ENCODE measurements at regions of chr20 and their contacts with region 1.

Region 1: DNA sequence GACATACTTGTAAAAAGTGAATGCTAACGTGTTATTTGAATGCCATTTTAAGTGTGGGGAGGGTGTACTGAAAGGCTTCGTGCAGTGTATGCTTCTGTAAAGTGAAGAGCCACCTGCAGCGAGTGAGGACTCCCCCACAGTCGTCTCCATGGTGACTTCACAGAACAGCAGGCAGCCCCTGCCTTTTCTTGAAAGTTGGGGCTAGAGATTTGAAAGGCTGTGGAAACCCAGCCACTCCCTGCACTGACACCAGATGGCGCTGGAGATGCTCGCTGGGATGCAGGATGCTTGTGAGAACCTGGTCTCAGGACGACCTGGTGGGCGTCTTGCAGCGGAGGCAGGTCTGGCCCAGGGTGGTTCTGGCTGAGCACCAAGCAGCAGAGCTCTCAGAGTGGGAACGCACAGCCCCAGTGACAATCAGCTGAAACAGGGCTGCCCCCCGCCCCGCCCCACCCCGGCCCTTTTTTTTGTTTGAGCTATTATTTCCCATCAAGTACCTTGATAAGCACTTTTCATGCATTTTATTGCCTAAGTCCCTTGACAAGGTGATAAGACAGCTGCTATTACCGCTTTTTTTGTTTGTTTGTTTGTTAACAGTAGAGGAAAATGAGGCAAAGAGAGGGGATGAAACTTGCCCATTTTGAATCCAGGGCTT is 150.3 kb downstream of the SYCP2 start:
- DNase-seq: peak; percentile 88
- H3K4me3 Mint-ChIP-seq: no peak overlapping the region
- H3K27ac Mint-ChIP-seq: no peak overlapping the region
- H3K4me1 Mint-ChIP-seq: no peaks in the 10 kb centered on the region
- H3K27me3 Mint-ChIP-seq: peaks cover 3% of the 10 kb centered on the region
- CTCF ChIP-seq: peak; percentile 99

Region 2: DNA sequence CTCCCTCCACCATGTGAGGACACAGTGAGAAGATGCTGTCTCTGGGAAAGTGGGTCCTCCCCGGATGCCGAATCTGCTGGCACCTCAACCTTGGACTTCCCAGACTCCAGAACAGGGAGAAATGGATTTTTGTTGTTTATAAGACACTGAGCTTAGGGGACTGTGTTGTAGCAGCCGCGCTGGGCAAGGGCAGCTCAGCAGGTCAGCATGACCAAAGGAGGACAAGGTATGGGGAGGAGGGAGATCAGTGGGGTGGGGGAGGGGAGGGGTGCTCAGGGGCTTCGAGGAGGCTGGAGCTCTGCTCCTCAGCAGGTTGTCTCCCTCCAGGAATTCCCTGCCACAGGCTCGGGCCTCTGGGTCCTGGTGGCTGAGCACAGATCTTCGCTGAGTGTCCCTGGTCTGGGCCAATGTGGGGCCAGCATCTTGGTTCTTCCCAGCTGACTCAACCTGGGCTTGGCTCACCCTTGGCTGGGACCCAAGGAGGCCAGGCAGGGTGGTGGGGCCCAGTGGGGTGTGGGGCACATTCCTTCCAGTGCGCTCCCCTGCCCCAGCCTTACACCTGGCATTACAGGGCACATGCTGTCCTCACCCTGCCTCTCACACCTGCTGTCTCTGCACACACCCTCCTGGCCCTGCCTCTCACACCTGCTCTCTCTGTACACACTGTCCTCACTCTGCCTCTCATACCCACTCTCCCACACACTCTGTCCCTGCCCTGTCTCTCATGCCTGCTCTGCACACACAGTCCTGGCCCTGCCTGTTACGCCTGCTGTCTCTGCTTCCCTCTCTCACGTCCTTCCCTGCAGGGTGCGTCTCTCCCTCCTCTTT is 43.0 kb after region 1 on chr20:
- CTCF ChIA-PET with region 1: interaction called, 14 read pairs
- intact Hi-C with region 1: loop called (anchors 2 kb)
- DNase-seq: peak; percentile 93
- H3K4me3 Mint-ChIP-seq: peak overlapping the region; percentile 8
- H3K27ac Mint-ChIP-seq: peak overlapping the region; percentile 53
- H3K4me1 Mint-ChIP-seq: peaks cover 57% of the 10 kb centered on the region
- H3K27me3 Mint-ChIP-seq: no peaks in the 10 kb centered on the region
- CTCF ChIP-seq: no peak

Region 3: DNA sequence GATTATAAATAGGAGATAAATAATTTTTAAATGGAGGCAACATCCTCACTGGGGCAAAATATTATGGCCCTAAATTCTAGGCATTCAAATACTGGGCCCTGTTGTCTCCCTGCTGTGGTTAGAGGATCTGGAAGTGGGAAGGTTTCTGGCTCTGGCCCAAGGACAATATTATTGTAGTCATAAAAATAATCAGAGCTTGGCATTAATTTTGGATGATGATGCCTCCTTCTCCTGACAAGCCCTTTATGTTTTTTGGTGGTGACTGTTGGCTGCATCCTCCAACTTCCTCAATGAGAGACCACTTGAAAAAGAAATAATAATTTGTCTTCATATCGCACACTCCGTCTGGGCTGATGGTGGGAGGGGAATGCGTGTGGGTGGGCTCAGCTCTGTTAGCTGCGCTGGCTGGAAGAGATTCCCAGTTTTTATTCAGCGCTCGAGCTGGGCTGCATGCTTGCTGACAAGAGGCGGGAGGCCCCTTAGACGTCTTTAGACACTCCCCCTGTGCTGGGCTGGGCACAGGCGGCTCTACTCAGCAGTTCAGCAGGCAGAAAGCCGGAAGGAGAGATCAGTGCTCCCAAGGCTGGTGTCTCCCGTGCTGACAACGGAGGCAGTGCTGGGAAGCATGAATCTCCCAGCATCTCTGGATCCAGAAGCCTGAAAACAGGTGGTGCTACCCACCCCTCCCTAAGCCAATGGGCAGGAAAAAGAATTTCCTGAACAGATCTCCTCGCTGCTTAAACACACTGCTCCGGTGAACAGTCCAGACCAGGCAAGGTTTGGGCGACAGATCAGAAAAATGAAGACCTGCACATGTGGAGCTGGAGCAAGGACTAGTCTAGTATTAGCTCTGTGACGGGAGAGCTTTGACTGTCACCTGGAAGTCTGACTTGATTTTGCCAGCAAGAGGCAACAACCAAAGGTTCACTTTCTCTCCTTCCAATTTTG is 52.6 kb after region 1 on chr20:
- CTCF ChIA-PET with region 1: interaction called, 14 read pairs
- intact Hi-C with region 1: no loop called
- DNase-seq: peak; percentile 61
- H3K4me3 Mint-ChIP-seq: peak overlapping the region; percentile 65
- H3K27ac Mint-ChIP-seq: peak overlapping the region; percentile 61
- H3K4me1 Mint-ChIP-seq: peaks cover 73% of the 10 kb centered on the region
- H3K27me3 Mint-ChIP-seq: no peaks in the 10 kb centered on the region
- CTCF ChIP-seq: no peak